ENCODE measurements at regions of chr6 and their contacts with region 1.

Region 1: DNA sequence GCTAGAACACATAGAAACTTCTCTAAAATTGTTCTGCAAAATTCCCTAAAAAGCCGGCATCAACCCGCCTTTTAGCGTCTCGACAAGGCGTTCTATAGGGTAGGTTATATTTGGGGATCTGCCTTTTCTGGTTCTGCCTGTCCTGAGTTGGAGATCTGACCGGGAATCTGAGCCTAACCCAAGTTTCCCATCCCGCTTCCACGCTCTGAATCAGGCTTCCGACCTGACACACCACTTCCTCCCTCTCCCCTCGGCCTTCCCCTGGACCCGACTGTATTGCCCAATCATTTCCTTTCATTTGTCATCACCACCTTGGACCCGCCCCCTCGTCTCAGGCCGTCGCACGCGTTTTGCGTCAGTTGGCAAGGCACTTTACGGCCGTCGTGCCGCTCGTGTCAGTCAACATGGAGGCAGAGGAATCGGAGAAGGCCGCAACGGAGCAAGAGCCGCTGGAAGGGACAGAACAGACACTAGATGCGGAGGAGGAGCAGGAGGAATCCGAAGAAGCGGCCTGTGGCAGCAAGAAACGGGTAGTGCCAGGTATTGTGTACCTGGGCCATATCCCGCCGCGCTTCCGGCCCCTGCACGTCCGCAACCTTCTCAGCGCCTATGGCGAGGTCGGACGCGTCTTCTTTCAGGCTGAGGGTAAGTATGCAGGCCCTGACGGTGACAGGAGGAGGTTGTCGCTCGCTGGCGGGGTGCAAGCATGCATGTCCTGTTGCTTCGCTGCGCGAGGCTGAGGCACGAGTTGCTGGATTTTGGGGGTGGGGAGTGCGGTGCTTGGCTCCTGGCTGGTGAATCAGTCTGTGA is at the start of gene ABT1:
- DNase-seq: peak; percentile 95

Region 2: GRCh38 chr6:26329763-26330511 is 266.8 kb before region 1 on chr6:
- CTCF ChIA-PET with region 1: interaction called, 16 read pairs
- POLR2A ChIA-PET with region 1: interaction called, 3 read pairs
- DNase-seq: no peak

Region 3: DNA sequence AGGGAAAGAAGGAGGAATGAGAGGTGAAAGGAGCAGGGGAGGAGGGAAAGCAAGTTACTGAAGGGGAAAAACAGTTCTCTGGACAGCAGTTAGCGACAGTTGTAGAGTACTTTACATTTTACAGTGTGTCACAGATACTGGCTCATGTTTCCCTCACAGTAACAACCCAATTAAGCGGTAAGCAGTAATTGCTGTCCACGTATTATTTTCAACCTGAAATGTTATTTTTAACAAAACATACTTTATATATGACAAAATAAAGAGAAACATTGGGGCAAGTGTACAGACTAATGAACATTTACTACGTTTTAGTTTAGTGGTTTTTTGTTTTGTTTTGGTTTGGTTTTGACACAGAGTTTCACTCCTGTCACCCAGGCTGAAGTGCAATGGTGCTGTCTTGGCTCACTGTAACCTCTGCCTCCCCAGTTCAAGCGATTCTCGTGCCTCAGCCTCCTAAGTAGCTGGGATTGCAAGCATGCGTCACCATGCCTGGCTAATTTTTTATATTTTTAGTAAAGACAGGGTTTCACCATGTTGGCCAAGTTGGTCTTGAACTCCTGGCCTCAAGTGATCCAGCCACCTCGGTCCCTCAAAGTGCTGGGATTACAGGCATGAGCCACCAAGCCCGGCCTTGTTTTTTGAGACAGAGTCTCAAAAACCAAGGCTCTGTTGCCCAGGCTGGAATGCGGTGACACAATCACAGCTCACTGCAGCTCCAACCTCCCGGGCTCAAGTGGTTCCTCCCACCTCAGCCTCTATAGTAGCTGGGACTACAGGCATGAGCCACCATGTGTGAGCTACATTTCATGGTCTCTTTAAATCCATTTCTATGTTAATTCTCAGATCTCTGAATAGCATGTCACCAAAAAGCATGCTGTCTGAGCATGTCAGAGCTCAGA is 254.4 kb before region 1 on chr6:
- CTCF ChIA-PET with region 1: interaction called, 17 read pairs
- POLR2A ChIA-PET with region 1: no interaction called
- DNase-seq: no peak

Region 4: GRCh38 chr6:26568601-26569432 is 28.0 kb before region 1 on chr6:
- CTCF ChIA-PET with region 1: interaction called, 18 read pairs
- POLR2A ChIA-PET with region 1: interaction called, 15 read pairs
- DNase-seq: peak; percentile 80

Region 5: DNA sequence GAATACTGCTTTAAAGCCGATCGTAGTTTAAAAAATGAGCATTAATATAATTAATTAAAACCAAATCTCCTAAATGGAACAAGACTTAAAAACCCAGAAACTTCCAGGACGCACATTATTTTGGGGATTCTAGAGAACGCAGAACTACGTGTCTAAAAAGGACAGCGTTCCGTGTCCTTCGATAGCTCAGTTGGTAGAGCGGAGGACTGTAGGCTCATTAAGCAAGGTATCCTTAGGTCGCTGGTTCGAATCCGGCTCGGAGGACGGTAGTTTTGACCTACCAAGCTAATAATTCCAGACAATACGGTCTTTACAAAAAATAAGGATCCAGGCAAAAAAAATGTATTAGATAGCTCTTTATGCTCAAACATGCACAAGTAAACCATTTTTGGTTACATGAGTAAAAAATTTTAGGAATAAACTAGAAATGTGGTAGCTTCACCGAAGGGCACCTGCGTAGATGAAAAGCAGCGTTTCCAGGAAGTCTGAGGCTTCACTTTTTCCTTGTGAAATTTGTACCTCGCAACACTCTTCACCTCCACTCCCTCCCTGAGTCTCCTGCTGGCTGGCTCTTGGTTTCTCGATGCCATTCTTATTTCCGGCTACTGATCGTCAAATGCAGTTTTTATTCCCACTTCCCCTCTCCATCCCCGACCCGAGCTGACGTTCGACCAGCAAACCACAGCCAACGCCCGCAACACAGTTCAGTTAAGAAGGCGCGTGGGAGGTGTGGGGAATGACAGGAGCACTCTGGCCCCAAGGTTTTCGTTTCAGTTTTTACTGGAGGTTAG is 19.7 kb before region 1 on chr6:
- CTCF ChIA-PET with region 1: interaction called, 27 read pairs
- POLR2A ChIA-PET with region 1: interaction called, 43 read pairs
- DNase-seq: no peak

Measured in HEK293T (cell line).